Caco-2 (cell line): ENCODE measurements at regions of chr19 and their contacts with region 1.

Region 1: DNA sequence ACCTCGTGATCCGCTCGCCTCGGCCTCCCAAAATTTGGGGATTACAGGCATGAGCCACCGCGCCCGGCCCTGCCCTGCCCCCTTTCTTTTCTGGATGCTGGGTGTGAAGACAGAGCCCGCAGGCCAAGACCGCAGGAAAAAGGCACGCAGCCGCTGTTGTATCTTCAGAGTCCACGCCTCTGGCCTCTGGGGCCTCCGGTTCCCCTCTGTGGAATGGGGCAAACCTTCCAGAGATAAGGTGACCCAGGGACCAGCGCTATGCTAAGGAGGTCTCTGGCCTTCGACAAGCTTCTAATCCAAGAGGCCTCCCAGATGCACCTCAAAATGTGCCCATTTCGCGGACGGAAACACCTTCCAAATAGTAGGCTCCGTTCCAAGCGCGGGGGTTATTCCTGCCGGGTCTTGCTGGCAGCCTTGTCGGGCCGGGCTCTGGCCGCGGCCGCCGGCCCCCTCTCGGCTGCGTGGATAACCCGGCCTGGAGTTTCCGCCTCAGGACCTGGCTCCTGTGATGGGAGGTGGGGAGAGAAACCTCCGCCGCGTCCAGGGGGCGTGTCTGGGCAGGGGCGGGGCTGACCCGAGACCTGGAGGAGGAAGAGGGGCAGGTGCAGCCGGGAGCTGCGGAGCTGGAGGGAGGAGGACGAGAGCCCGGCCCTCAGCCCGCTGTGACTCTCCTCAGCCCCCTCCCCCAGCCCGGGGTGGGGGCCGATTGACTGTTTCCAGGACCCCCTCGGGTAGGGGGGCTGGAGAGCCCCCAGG is 13.1 kb downstream of the TJP3 start:
- DNase-seq: peak; percentile 97 to 98
- H3K4me3 ChIP-seq: peak overlapping the region; percentile 57
- H3K4me3 Mint-ChIP-seq: peak overlapping the region; percentile 87
- H3K27ac Mint-ChIP-seq: peak overlapping the region; percentile 93
- H3K4me1 ChIP-seq: peaks cover 36% of the 10 kb centered on the region
- H3K4me1 Mint-ChIP-seq: no peaks in the 10 kb centered on the region
- H3K27me3 ChIP-seq: no peaks in the 10 kb centered on the region
- H3K27me3 Mint-ChIP-seq: no peaks in the 10 kb centered on the region
- CTCF ChIP-seq: no peak

Region 2: DNA sequence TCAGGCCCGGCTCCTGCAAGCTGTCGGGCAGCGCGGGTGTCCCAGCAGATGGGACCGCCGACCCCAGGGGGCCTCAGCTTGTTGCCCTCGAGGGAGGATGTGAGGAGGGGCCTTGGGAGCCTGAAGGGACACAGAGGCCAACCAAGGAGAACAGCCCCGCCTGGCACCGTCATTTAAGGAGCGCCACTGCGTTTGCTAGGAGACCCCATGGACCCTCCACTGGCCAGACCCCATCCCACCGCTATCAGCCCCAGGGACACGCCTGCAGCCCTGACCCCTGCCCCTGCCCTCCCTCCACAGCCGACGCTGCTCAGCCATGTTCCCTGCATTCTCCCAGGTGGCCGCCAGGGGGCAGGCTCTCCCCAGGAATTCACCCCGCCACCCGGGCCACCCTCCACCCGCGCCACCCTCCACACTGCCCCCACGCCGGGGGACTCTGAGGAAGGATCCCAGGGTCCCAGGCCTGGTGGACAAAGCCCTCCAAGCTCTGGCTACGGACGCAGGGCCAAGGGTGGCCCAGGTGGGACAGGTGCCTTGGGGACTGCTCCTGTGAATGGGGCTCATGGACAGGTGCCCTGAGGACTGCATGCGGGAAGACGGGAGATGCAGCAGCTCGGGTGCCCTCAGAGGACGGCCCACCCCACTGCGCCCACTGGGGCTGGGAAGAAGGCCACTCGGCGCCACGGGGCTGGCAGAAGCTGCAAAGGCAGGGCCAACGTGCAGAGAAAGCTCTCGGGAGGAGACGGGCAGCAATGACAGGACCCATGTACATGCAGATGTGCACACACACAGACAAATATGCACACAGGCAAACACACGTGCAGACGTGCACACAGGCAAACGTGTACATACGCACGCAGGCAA is 55.4 kb before region 1 on chr19:
- CTCF ChIA-PET with region 1: no interaction called
- POLR2A ChIA-PET with region 1: no interaction called
- intact Hi-C with region 1: loop called (anchors 5 kb)
- DNase-seq: peak in 1 of 2 experiments; percentile 77
- H3K4me3 ChIP-seq: no peak overlapping the region
- H3K4me3 Mint-ChIP-seq: no peak overlapping the region
- H3K27ac Mint-ChIP-seq: no peak overlapping the region
- H3K4me1 ChIP-seq: peaks cover 11% of the 10 kb centered on the region
- H3K4me1 Mint-ChIP-seq: no peaks in the 10 kb centered on the region
- H3K27me3 ChIP-seq: no peaks in the 10 kb centered on the region
- H3K27me3 Mint-ChIP-seq: no peaks in the 10 kb centered on the region
- CTCF ChIP-seq: peak; percentile 91 to 92

Region 3: GRCh38 chr19:3710265-3710812 is 11.0 kb before region 1 on chr19:
- CTCF ChIA-PET with region 1: interaction called, 4 read pairs
- POLR2A ChIA-PET with region 1: interaction called, 13 read pairs
- intact Hi-C with region 1: loop called (anchors 1 kb)
- DNase-seq: peak; percentile 77 to 91
- H3K4me3 ChIP-seq: no peak overlapping the region
- H3K4me3 Mint-ChIP-seq: peak overlapping the region; percentile 33
- H3K27ac Mint-ChIP-seq: peak overlapping the region; percentile 83
- H3K4me1 ChIP-seq: peaks cover 34% of the 10 kb centered on the region
- H3K4me1 Mint-ChIP-seq: peaks cover 15% of the 10 kb centered on the region
- H3K27me3 ChIP-seq: no peaks in the 10 kb centered on the region
- H3K27me3 Mint-ChIP-seq: no peaks in the 10 kb centered on the region
- CTCF ChIP-seq: no peak

Region 4: GRCh38 chr19:3762501-3763459 is 41.5 kb after region 1 on chr19 and contains the start of gene MRPL54:
- CTCF ChIA-PET with region 1: interaction called, 5 read pairs
- POLR2A ChIA-PET with region 1: interaction called, 23 read pairs
- intact Hi-C with region 1: loop called (anchors 2 kb)
- DNase-seq: peak; percentile 98
- H3K4me3 ChIP-seq: peak within 1 kb of the TSS; percentile 68
- H3K4me3 Mint-ChIP-seq: peak within 1 kb of the TSS; percentile 96
- H3K27ac Mint-ChIP-seq: peak within 1 kb of the TSS; percentile 99
- H3K4me1 ChIP-seq: peaks cover 4% of the 10 kb centered on the region
- H3K4me1 Mint-ChIP-seq: peaks cover 8% of the 10 kb centered on the region
- H3K27me3 ChIP-seq: no peaks in the 10 kb centered on the region
- H3K27me3 Mint-ChIP-seq: no peaks in the 10 kb centered on the region
- CTCF ChIP-seq: no peak
- total RNA-seq, gene MRPL54: 46.4 and 54.5 TPM in 2 replicates

Region 5: GRCh38 chr19:3821857-3822364 is 100.6 kb after region 1 on chr19:
- CTCF ChIA-PET with region 1: no interaction called
- POLR2A ChIA-PET with region 1: no interaction called
- intact Hi-C with region 1: no loop called
- DNase-seq: peak in 1 of 2 experiments; percentile 70
- H3K4me3 ChIP-seq: no peak overlapping the region
- H3K4me3 Mint-ChIP-seq: no peak overlapping the region
- H3K27ac Mint-ChIP-seq: no peak overlapping the region
- H3K4me1 ChIP-seq: no peaks in the 10 kb centered on the region
- H3K4me1 Mint-ChIP-seq: no peaks in the 10 kb centered on the region
- H3K27me3 ChIP-seq: no peaks in the 10 kb centered on the region
- H3K27me3 Mint-ChIP-seq: no peaks in the 10 kb centered on the region
- CTCF ChIP-seq: peak; percentile 76 to 95